CD4-positive, alpha-beta memory T cell (primary cell): ENCODE measurements at regions of chr7 and their contacts with region 1.

Region 1: GRCh38 chr7:35537067-35538023 is 157.6 kb downstream of the HERPUD2 start:
- DNase-seq: peak; percentile 68 to 78 (median 75)
- H3K4me3 ChIP-seq: peak overlapping the region in 1 of 2 donors; percentile 31
- H3K4me3 Mint-ChIP-seq: peak overlapping the region; percentile 77 to 93 (median 84)
- H3K27ac ChIP-seq: no peak overlapping the region
- H3K27ac Mint-ChIP-seq: peak overlapping the region in 2 of 7 donors; percentile 32 to 80
- H3K4me1 ChIP-seq: no peaks in the 10 kb centered on the region
- H3K4me1 Mint-ChIP-seq: peaks cover 0 to 3% (median under 1%) of the 10 kb centered on the region in 4 donors
- H3K27me3 ChIP-seq: no peaks in the 10 kb centered on the region
- H3K27me3 Mint-ChIP-seq: peaks cover 3 to 7% of the 10 kb centered on the region in 2 donors

Region 2: DNA sequence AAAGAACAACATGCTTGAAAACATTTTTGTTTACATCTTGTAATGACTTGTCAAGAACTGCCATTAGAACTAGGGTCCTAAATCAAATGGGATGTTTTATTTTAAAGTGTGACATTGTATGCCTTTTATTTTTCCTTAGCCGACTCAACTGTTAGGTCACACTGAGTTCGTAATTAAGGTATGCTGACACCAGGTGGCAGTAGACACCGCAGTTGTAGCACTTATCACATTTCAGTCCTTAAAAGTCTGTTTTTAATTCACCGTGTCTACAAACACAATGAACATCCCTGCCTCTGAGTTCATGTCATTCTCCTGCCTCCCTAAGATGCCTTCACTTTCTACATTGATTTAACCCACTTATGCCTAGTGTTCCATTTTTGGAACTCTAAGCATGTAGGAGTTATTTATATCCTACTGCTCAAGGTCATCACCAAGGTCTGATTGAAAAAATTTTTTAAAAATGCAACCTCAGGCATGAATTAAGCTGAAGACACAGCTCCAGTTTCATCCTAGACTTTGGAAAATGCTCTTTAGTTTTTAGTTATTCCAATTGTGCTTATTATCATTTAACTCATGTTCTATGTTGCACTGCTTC is 1445.9 kb before region 1 on chr7:
- CTCF ChIA-PET with region 1: no interaction called
- POLR2A ChIA-PET with region 1: no interaction called
- intact Hi-C with region 1: loop called (anchors 5 kb)
- DNase-seq: no peak
- H3K4me3 ChIP-seq: no peak overlapping the region
- H3K4me3 Mint-ChIP-seq: no peak overlapping the region
- H3K27ac ChIP-seq: no peak overlapping the region
- H3K27ac Mint-ChIP-seq: no peak overlapping the region
- H3K4me1 ChIP-seq: no peaks in the 10 kb centered on the region
- H3K4me1 Mint-ChIP-seq: no peaks in the 10 kb centered on the region
- H3K27me3 ChIP-seq: no peaks in the 10 kb centered on the region
- H3K27me3 Mint-ChIP-seq: peaks cover 0 to 3% of the 10 kb centered on the region in 2 donors

Region 3: DNA sequence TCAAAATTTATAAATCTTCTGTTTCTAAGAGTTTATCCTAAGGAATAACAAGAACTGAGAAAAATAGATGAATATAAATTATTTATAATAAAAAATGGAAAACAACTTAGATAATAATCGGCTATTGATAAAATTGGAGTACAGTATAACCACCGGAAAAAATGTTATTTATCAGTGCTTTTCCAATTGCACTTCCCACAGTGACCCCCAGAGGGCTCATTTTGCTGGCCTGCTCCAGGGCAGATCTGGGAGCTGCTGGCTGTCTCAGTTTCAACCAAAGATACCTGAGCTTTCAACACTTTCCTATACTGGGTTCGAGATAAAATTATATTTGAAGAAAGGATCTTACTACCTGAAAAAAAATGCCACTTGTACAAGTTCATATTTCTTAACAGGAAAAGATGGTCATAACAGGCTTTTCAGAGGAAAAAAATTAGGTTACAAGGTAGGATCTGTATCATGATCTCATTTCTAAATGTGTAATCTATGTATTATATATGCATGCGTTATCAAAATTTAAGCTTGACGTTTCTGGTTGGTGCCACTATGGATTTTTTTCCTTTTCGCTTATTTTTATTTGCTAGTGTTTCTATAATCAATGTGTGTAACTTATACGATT is 713.6 kb before region 1 on chr7:
- CTCF ChIA-PET with region 1: interaction called, 4 read pairs
- POLR2A ChIA-PET with region 1: no interaction called
- intact Hi-C with region 1: loop called (anchors 1 kb)
- DNase-seq: peak; percentile 22 to 55 (median 36)
- H3K4me3 ChIP-seq: no peak overlapping the region
- H3K4me3 Mint-ChIP-seq: no peak overlapping the region
- H3K27ac ChIP-seq: no peak overlapping the region
- H3K27ac Mint-ChIP-seq: no peak overlapping the region
- H3K4me1 ChIP-seq: no peaks in the 10 kb centered on the region
- H3K4me1 Mint-ChIP-seq: no peaks in the 10 kb centered on the region
- H3K27me3 ChIP-seq: no peaks in the 10 kb centered on the region
- H3K27me3 Mint-ChIP-seq: no peaks in the 10 kb centered on the region

Region 4: GRCh38 chr7:35424869-35425495 is 112.4 kb before region 1 on chr7:
- CTCF ChIA-PET with region 1: interaction called, 5 read pairs
- POLR2A ChIA-PET with region 1: no interaction called
- intact Hi-C with region 1: loop called (anchors 1 kb)
- DNase-seq: peak; percentile 45 to 54 (median 51)
- H3K4me3 ChIP-seq: no peak overlapping the region
- H3K4me3 Mint-ChIP-seq: no peak overlapping the region
- H3K27ac ChIP-seq: no peak overlapping the region
- H3K27ac Mint-ChIP-seq: peak overlapping the region in 1 of 7 donors; percentile 3
- H3K4me1 ChIP-seq: no peaks in the 10 kb centered on the region
- H3K4me1 Mint-ChIP-seq: peaks cover 0 to 3% (median 3%) of the 10 kb centered on the region in 4 donors
- H3K27me3 ChIP-seq: no peaks in the 10 kb centered on the region
- H3K27me3 Mint-ChIP-seq: peaks cover 13 to 15% of the 10 kb centered on the region in 2 donors

Region 5: DNA sequence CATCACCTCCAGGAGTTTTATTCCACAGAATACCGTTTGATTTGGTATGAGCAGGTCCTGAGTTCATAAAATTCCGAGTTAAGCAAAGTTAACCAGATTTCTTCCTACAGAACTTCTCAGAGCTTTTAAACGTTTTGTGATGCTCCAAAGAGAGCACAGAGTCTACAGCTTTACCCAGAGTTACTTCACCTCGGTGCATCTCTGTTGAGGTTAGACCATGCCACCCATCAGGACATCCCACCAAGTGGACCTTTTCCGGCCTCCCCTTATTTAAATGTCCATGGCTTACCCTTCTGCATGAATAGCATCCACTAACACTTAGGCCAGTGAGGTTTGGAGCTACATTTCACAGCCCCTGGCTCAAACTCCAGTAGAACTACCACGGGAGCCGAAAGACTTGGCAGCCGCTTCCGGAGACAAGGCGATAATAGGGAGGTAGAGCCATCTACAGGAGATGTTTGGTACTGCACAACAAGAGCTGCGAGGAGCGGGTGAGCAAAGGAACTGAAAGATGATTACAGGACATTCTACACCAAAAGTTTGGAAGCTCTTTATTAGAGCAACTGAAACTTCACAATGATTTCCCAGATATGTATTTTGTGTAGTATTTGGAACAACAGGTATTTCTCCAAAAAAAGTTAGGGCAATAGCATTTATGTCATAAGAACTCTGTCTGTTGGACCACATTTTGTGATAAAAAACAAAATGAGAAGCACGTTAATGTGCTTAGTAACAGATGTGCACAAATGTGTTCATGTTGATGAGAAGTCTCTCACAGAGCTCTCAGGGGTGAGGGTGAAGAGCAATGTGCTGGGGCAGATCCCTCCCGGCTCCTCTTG is 17.2 kb before region 1 on chr7:
- CTCF ChIA-PET with region 1: interaction called, 12 read pairs
- POLR2A ChIA-PET with region 1: no interaction called
- intact Hi-C with region 1: no loop called
- DNase-seq: peak; percentile 36 to 50 (median 48)
- H3K4me3 ChIP-seq: no peak overlapping the region
- H3K4me3 Mint-ChIP-seq: peak overlapping the region in 1 of 8 donors; percentile 40
- H3K27ac ChIP-seq: no peak overlapping the region
- H3K27ac Mint-ChIP-seq: peak overlapping the region in 1 of 7 donors; percentile 0
- H3K4me1 ChIP-seq: no peaks in the 10 kb centered on the region
- H3K4me1 Mint-ChIP-seq: peaks cover 0 to 4% (median 4%) of the 10 kb centered on the region in 4 donors
- H3K27me3 ChIP-seq: no peaks in the 10 kb centered on the region
- H3K27me3 Mint-ChIP-seq: peaks cover 3 to 10% of the 10 kb centered on the region in 2 donors